Activated naive CD8-positive, alpha-beta T cell treated with anti-CD3 and anti-CD28 coated beads, Interleukin-2, amount 10 ng/mL, durations not matched to agents 7 days and 5 days (primary cell): ENCODE measurements at regions of chr9 and their contacts with region 1.

Region 1: GRCh38 chr9:136363606-136364370 is at the start of gene DNLZ:
- DNase-seq: peak; percentile 96
- ATAC-seq: peak; percentile 83
- H3K4me3 Mint-ChIP-seq: peak within 1 kb of the TSS; percentile 83
- H3K27ac Mint-ChIP-seq: peak within 1 kb of the TSS; percentile 90
- H3K4me1 Mint-ChIP-seq: peaks cover 2% of the 10 kb centered on the region
- H3K27me3 Mint-ChIP-seq: no peaks in the 10 kb centered on the region
- total RNA-seq, gene DNLZ: 15.4 to 17.0 TPM

Region 2: DNA sequence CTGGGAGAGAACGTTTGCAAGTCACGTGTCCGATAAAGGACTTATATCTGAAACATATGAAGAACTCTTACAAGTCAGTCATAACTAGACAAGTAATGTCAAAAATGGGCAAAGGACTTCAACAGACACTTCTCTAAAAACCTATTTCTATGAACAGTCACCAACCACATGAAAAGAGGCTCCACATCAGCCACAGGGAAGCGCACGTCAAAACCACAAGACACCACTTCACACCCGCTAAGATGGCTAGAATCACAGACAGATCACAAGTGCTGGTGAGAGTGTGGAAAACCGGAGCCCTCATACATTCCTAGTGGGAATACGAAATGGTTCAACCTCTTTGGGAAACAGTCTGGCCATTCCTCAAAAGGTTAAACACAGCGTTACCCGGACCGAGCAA is 21.2 kb after region 1 on chr9:
- POLR2A ChIA-PET with region 1: interaction called, 12 read pairs
- DNase-seq: peak; percentile 57
- ATAC-seq: peak; percentile 78
- H3K4me3 Mint-ChIP-seq: peak overlapping the region; percentile 54
- H3K27ac Mint-ChIP-seq: peak overlapping the region; percentile 14
- H3K4me1 Mint-ChIP-seq: peaks cover 21% of the 10 kb centered on the region
- H3K27me3 Mint-ChIP-seq: no peaks in the 10 kb centered on the region

Region 3: DNA sequence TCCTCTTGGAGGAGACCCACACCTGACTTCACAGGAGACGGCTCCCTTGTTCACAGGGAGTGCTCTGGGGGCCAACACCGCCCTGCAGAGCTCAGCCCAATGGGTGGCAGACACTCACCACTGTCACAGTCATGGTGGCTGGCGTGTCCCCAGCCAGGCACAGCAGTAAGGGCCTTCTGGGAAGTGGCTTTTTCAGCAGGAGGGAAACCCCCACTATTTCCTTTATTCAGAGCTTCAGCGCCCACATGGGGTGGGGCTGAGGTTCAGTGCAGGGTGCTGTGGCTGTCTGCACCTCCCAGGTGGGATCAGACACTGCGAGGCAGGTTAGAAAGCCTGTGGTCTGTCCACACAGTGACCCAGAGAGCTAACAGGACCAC is 39.7 kb after region 1 on chr9:
- POLR2A ChIA-PET with region 1: interaction called, 15 read pairs
- DNase-seq: peak; percentile 79
- ATAC-seq: peak; percentile 84
- H3K4me3 Mint-ChIP-seq: peak overlapping the region; percentile 69
- H3K27ac Mint-ChIP-seq: peak overlapping the region; percentile 74
- H3K4me1 Mint-ChIP-seq: peaks cover 42% of the 10 kb centered on the region
- H3K27me3 Mint-ChIP-seq: no peaks in the 10 kb centered on the region